ENCODE measurements at regions of chr1 and their contacts with region 1.

Region 1: GRCh38 chr1:162847839-162848453 is 13.0 kb downstream of the CCDC190 start:
- DNase-seq: peak; percentile 90
- ATAC-seq: peak; percentile 48
- H3K4me3 ChIP-seq: no peak overlapping the region
- H3K27ac ChIP-seq: no peak overlapping the region
- H3K4me1 ChIP-seq: peaks cover 15% of the 10 kb centered on the region
- H3K27me3 ChIP-seq: no peaks in the 10 kb centered on the region
- CTCF ChIP-seq: peak; percentile 99

Region 2: GRCh38 chr1:162966613-162967012 is 118.7 kb after region 1 on chr1:
- CTCF ChIA-PET with region 1: no interaction called
- POLR2A ChIA-PET with region 1: no interaction called
- intact Hi-C with region 1: no loop called
- DNase-seq: no peak
- ATAC-seq: no peak
- H3K4me3 ChIP-seq: no peak overlapping the region
- H3K27ac ChIP-seq: no peak overlapping the region
- H3K4me1 ChIP-seq: no peaks in the 10 kb centered on the region
- H3K27me3 ChIP-seq: no peaks in the 10 kb centered on the region
- CTCF ChIP-seq: no peak

Region 3: DNA sequence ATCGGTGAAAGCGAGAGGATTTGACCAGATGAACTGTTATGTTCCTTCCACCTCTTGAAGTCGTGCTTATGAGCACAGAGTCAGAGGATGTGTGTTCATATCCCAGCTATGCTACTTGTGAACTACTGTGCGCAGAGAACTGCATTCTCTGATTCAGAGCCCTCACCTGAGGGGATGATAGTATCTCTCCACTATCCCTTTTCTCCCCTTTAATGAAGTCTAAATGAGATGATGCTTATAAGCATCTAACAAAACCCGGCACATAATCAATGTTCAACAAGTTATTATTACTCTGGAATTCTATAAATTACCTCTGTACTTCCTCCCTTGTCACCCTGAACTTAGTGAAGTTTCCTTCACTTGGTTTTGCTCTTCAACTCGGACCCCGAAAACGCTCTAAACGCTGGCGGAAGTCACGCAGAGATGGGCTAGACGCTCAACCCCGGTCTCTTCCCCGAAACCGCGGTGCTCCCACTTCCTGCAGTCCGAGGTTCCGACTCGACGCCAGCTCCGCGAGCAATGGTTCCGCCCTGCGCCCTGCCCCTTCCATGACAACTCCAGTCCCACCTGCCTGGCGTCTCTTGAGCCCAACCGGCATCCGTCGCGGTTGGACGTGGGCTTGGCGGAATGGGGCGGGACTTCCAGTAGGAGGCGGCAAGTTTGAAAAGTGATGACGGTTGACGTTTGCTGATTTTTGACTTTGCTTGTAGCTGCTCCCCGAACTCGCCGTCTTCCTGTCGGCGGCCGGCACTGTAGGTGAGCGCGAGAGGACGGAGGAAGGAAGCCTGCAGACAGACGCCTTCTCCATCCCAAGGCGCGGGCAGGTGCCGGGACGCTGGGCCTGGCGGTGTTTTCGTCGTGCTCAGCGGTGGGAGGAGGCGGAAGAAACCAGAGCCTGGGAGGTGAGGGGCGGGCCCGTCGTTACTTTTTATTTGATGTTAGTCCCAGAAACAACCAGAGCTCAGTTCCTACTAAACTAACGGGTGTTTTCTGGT is 473.7 kb after region 1 on chr1 and contains the start of gene NUF2:
- CTCF ChIA-PET with region 1: interaction called, 4 read pairs
- POLR2A ChIA-PET with region 1: no interaction called
- intact Hi-C with region 1: loop called (anchors 1 kb)
- DNase-seq: peak; percentile 99
- ATAC-seq: peak; percentile 92
- H3K4me3 ChIP-seq: peak within 1 kb of the TSS; percentile 92
- H3K27ac ChIP-seq: peak within 1 kb of the TSS; percentile 89
- H3K4me1 ChIP-seq: peaks cover 23% of the 10 kb centered on the region
- H3K27me3 ChIP-seq: no peaks in the 10 kb centered on the region
- CTCF ChIP-seq: no peak
- total RNA-seq, gene NUF2: 35.6 and 62.1 TPM in 2 replicates